Stomach (tissue), 19 donors: ENCODE measurements at regions of chr15 and their contacts with region 1.

Region 1: GRCh38 chr15:90062023-90062442 is 40.2 kb downstream of the IDH2 start:
- DNase-seq: peak in 1 of 2 donors; percentile 92
- H3K4me3 ChIP-seq: no peak overlapping the region
- H3K27ac ChIP-seq: peak overlapping the region; percentile 49 to 87 (median 74)
- H3K4me1 ChIP-seq: peaks cover 36 to 89% (median 64%) of the 10 kb centered on the region in 4 donors
- H3K27me3 ChIP-seq: no peaks in the 10 kb centered on the region
- CTCF ChIP-seq: no peak
- EP300 ChIP-seq: no peak
- POLR2A ChIP-seq: no peak

Region 2: GRCh38 chr15:89893696-89894455 is 168.2 kb before region 1 on chr15 and contains the start of gene AP3S2:
- intact Hi-C with region 1: no loop called
- DNase-seq: peak; percentile 95 to 97
- H3K4me3 ChIP-seq: peak within 1 kb of the TSS; percentile 84 to 91 (median 88)
- H3K27ac ChIP-seq: peak within 1 kb of the TSS; percentile 93 to 96 (median 94)
- H3K4me1 ChIP-seq: peaks cover 7 to 38% (median 26%) of the 10 kb centered on the region in 4 donors
- H3K27me3 ChIP-seq: no peaks in the 10 kb centered on the region
- CTCF ChIP-seq: peak in 1 of 7 experiments; percentile 19
- EP300 ChIP-seq: no peak
- POLR2A ChIP-seq: peak in 2 of 4 donors; percentile 50 to 61
- total RNA-seq, gene AP3S2: 14.6 to 90.4 (median 34.5) TPM

Region 3: DNA sequence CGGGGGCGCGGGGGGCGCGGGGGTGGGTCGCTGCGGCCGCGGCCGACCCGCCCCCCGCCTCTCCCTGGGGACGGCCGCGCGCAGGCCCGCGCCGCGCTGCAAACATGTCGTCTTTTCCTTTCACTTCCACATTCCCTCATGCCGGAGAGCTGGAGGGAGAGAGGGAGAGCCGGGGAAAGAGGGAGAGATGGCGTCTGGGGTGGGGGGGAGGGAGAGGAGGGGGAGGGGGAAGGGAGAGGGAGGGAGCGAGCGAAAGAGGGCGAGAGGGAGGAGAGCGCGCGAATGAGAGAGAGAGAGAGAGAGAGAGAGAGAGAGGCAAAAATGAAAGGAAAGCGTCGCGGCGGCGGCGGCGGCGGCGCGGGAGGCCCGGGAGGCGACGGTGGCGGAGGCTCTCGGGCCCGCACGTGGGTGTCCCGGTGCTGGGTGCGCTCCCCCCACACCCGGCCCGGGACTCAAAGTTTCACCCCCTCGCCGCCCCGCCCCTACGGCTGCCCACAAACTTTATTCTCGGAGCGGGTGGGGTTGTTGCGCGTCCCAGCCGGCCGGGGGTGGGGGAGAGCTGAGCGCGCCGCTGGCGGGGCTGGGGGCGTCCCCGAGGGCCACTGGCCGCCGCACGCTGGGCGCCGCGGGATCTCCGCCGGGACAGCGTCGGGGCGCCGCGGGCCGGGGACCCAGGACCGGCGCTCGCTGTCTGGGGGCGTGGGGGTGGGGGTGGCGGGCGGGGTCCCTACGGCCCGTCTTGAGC is 60.2 kb before region 1 on chr15:
- intact Hi-C with region 1: loop called (anchors 10 kb)
- DNase-seq: peak; percentile 55 to 86
- H3K4me3 ChIP-seq: peak overlapping the region; percentile 76 to 94 (median 86)
- H3K27ac ChIP-seq: peak overlapping the region; percentile 69 to 96 (median 95)
- H3K4me1 ChIP-seq: peaks cover 40 to 79% (median 67%) of the 10 kb centered on the region in 4 donors
- H3K27me3 ChIP-seq: no peaks in the 10 kb centered on the region
- CTCF ChIP-seq: no peak
- EP300 ChIP-seq: no peak
- POLR2A ChIP-seq: no peak

Region 4: GRCh38 chr15:90020021-90020735 is 41.9 kb before region 1 on chr15:
- intact Hi-C with region 1: loop called (anchors 5 kb)
- DNase-seq: no peak
- H3K4me3 ChIP-seq: no peak overlapping the region
- H3K27ac ChIP-seq: peak overlapping the region; percentile 42 to 79 (median 53)
- H3K4me1 ChIP-seq: peaks cover 25 to 63% (median 33%) of the 10 kb centered on the region in 4 donors
- H3K27me3 ChIP-seq: no peaks in the 10 kb centered on the region
- CTCF ChIP-seq: no peak
- EP300 ChIP-seq: no peak
- POLR2A ChIP-seq: no peak